ENCODE measurements at regions of chr22 and their contacts with region 1.

Region 1: DNA sequence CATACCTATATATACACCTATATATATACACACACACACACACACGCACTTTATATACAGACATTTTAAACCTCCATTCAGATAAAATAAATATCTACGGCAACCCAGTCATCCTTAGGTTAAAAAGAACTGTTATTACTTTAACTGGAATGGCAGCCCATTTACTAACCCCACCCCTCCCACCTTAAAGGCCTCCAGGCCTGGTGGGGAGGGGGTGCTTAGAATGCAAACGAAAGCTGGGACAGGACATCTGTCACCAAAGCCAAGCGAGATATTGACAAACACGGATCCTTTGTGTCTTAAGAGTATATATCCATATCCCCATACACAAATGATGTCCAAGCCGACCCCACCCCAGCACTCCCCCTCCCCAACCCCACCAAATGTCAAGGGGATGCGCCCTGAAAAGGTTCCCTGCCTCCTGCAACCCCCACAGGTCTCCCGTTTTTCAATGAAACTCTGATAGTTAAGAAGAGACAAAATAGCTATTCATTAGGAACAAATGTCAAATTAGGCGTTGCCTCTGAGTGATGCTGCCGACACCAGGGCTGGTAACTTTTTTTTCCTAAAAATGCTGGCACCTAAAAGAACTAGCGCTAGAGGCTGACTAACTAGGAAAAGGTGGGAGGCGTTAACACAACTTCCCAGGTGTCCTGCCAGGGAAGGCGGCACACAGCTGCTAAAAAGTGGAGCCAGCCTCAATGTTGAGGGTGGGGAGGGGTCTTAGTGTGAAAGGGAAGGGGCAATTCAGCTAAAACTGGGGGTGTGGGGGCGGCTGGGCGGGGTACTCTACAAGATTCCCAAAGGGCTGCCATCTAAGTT is 5.6 kb downstream of the MN1 start:
- DNase-seq: no peak
- H3K4me3 ChIP-seq: peak overlapping the region; percentile 23
- H3K27ac ChIP-seq: no peak overlapping the region
- H3K4me1 ChIP-seq: peaks cover 27% of the 10 kb centered on the region
- H3K27me3 ChIP-seq: no peaks in the 10 kb centered on the region
- CTCF ChIP-seq: no peak

Region 2: GRCh38 chr22:26689513-26690301 is 1106.2 kb before region 1 on chr22:
- CTCF ChIA-PET with region 1: no interaction called
- POLR2A ChIA-PET with region 1: interaction called, 11 read pairs
- intact Hi-C with region 1: no loop called
- DNase-seq: no peak
- H3K4me3 ChIP-seq: no peak overlapping the region
- H3K27ac ChIP-seq: no peak overlapping the region
- H3K4me1 ChIP-seq: no peaks in the 10 kb centered on the region
- H3K27me3 ChIP-seq: no peaks in the 10 kb centered on the region
- CTCF ChIP-seq: no peak

Region 3: GRCh38 chr22:27870234-27871191 is 74.6 kb after region 1 on chr22:
- CTCF ChIA-PET with region 1: no interaction called
- POLR2A ChIA-PET with region 1: interaction called, 13 read pairs
- intact Hi-C with region 1: no loop called
- DNase-seq: no peak
- H3K4me3 ChIP-seq: no peak overlapping the region
- H3K27ac ChIP-seq: no peak overlapping the region
- H3K4me1 ChIP-seq: peaks cover 39% of the 10 kb centered on the region
- H3K27me3 ChIP-seq: no peaks in the 10 kb centered on the region
- CTCF ChIP-seq: no peak

Measured in A673 (cell line).